ENCODE measurements at regions of chr1 and their contacts with region 1.

Region 1: GRCh38 chr1:192445848-192446489 is 129.2 kb downstream of the RGS21 start:
- DNase-seq: peak; percentile 60
- ATAC-seq: peak; percentile 69
- H3K4me3 ChIP-seq: no peak overlapping the region
- H3K27ac ChIP-seq: peak overlapping the region; percentile 40; the same call in 1 of the 2 replicates
- H3K4me1 ChIP-seq: peaks cover 10% of the 10 kb centered on the region
- H3K27me3 ChIP-seq: no peaks in the 10 kb centered on the region
- CTCF ChIP-seq: peak; percentile 87
- POLR2A ChIP-seq: no peak
- RAD21 ChIP-seq: peak; percentile 83

Region 2: GRCh38 chr1:191993549-191993948 is 452.4 kb before region 1 on chr1:
- CTCF ChIA-PET with region 1: interaction called, 4 read pairs
- POLR2A ChIA-PET with region 1: no interaction called
- dilution Hi-C with region 1: no loop called
- in situ Hi-C with region 1: loop called (anchors 10 kb)
- intact Hi-C with region 1: loop called (anchors 1 kb)
- DNase-seq: peak; percentile 61
- ATAC-seq: peak; percentile 72
- H3K4me3 ChIP-seq: no peak overlapping the region
- H3K27ac ChIP-seq: no peak overlapping the region
- H3K4me1 ChIP-seq: no peaks in the 10 kb centered on the region; the same call in 1 of the 2 replicates
- H3K27me3 ChIP-seq: no peaks in the 10 kb centered on the region
- CTCF ChIP-seq: peak; percentile 62
- POLR2A ChIP-seq: no peak
- RAD21 ChIP-seq: peak; percentile 79

Region 3: GRCh38 chr1:192303029-192303428 is 142.9 kb before region 1 on chr1:
- CTCF ChIA-PET with region 1: no interaction called
- POLR2A ChIA-PET with region 1: no interaction called
- dilution Hi-C with region 1: no loop called
- in situ Hi-C with region 1: no loop called
- intact Hi-C with region 1: no loop called
- DNase-seq: peak; percentile 42
- ATAC-seq: peak; percentile 72
- H3K4me3 ChIP-seq: no peak overlapping the region
- H3K27ac ChIP-seq: no peak overlapping the region
- H3K4me1 ChIP-seq: peaks cover 3% of the 10 kb centered on the region
- H3K27me3 ChIP-seq: no peaks in the 10 kb centered on the region
- CTCF ChIP-seq: no peak
- POLR2A ChIP-seq: no peak
- RAD21 ChIP-seq: no peak

Region 4: GRCh38 chr1:192327997-192328396 is 118.0 kb before region 1 on chr1:
- CTCF ChIA-PET with region 1: no interaction called
- POLR2A ChIA-PET with region 1: no interaction called
- dilution Hi-C with region 1: no loop called
- in situ Hi-C with region 1: loop called (anchors 10 kb)
- intact Hi-C with region 1: no loop called
- DNase-seq: no peak
- ATAC-seq: no peak
- H3K4me3 ChIP-seq: no peak overlapping the region
- H3K27ac ChIP-seq: no peak overlapping the region
- H3K4me1 ChIP-seq: no peaks in the 10 kb centered on the region
- H3K27me3 ChIP-seq: no peaks in the 10 kb centered on the region
- CTCF ChIP-seq: no peak
- POLR2A ChIP-seq: no peak
- RAD21 ChIP-seq: no peak